ENCODE measurements at regions of chr7 and their contacts with region 1.

Region 1: DNA sequence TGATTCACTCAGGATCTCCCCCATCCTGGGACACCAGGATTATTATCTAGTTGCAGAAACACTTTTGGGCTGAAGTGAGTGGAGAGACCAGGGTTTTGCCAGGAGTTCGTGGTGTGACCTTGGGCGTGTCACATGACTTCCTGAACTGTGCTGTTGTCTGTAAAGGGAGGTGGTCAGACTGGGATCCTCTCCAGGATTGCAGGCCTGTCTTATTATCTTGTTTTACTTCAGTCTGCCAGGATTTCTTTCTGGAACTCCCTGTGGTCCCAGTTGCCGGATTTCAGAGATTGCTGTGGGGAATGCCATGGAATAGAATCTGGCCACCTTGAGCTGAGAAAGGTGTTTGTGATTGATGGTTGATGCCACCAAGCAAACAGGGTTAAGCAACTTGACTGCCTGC is 35.8 kb downstream of the CRCP start:
- DNase-seq: peak; percentile 88

Region 2: GRCh38 chr7:66110861-66111260 is 39.6 kb before region 1 on chr7:
- intact Hi-C with region 1: loop called in 1 of 2 experiments (anchors 1 kb)
- DNase-seq: no peak

Region 3: DNA sequence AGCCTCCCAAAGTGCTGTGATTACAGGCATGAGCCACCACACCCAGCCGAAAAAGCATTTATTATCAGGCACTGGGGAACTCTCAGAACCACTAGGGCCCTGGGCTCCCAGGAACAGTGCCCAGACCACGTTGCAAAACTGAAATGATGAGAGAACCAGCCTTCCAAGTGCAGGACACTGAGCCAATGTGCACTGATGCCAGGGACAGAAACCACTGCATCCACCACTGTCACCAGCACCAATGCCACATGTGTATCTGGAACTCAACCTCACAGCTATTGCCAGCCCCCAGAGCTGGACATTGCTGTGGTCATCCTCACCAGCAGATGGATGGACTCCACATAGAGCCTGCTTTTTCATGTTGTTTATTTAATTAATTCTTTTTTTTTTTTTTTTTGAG is 26.4 kb after region 1 on chr7:
- intact Hi-C with region 1: no loop called
- DNase-seq: no peak

Region 4: GRCh38 chr7:66418537-66418936 is 268.1 kb after region 1 on chr7:
- intact Hi-C with region 1: no loop called
- DNase-seq: no peak